ENCODE measurements at regions of chr3 and their contacts with region 1.

Region 1: DNA sequence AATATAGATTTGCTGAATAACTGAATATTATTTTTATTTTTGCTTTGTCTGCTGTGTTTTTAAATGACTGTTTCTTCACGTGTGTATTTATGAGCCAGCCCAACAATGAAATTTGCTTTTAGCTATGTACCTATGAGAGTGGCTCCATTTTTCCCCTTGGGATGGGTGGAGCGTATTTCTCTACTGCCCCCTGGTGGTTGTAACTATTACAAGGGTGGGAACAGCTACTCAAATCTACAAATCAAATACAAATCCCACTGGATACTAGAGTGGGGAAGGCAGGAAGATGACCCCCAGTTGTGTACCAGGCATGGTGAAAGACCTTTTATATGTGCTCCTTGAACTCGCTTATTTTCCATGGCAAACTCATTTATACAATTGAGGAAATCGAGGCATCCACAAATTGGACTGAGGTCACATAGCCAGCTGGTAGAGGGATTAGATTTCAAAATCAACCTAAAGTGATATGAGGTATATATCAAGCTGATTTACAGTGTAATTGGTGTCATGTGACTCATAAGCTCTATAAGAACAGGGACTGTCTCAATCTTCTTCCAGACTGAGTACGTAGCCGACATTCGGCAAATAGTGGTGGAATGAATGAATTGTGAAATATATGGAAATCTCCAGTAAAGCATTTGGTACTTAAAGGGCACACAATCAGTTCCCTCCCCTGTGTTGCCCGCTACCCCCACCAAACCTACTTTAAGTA is 69.5 kb upstream of the VEPH1 start:
- DNase-seq: no peak
- ATAC-seq: peak; percentile 42 to 68 (median 56)
- H3K4me3 ChIP-seq: no peak overlapping the region
- H3K27ac ChIP-seq: no peak overlapping the region
- H3K4me1 ChIP-seq: no peaks in the 10 kb centered on the region
- H3K27me3 ChIP-seq: no peaks in the 10 kb centered on the region
- CTCF ChIP-seq: peak; percentile 66

Region 2: DNA sequence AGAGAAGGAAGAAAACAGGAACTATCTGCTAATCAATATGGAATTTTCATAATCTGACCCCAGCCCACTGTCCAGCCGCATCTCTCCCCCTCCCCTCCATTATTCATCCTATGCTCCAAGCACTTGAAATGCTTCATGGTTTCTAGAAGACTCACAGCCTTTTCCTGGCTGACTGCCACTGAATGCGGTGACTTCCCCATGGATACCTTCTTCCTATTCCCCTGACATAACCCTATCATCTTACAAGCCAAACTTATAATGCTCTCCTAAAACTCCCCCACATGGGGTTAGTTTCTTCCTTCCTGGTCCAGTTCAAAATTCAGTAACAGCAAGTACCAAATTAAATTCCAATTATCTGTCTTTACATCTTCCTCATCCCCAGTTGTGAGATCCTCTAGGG is 167.3 kb before region 1 on chr3:
- intact Hi-C with region 1: no loop called
- DNase-seq: no peak
- ATAC-seq: no peak
- H3K4me3 ChIP-seq: no peak overlapping the region
- H3K27ac ChIP-seq: no peak overlapping the region
- H3K4me1 ChIP-seq: no peaks in the 10 kb centered on the region
- H3K27me3 ChIP-seq: no peaks in the 10 kb centered on the region
- CTCF ChIP-seq: no peak

Region 3: DNA sequence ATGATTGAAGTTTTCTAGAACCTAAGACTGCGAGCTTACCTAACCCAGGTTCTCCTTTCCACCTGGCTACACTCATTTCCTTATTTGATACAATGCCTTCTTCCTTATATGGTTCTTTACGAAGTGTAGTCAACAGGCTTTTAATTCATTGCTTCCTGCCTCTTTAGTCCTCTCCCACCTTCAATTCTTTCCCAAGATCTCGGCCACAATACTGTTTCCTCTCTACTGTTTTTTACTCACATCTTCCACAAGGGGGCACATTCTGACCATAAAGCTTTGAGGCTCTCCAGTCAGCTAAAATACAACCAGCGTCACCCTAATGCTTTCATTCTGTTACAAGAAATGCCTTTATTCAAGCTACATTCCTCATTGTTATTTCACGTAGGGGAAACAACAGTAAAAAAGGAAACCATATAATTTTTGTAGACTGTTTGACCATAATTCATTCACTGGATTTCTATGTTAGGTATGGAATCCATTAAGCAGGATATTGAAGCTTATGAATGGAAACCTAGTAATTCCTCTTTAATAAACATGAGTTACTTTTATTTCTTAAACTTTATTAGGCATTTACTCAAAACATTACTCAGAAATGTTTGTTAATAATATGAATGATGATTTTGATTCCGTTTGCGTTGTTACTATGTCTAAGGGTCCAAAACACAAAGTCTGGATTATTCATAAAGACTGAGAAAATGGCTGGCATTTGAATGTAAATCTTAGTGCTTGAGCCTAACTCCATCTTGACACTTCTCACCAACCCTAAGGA is 40.0 kb before region 1 on chr3:
- intact Hi-C with region 1: loop called (anchors 1 to 2 kb)
- DNase-seq: no peak
- ATAC-seq: peak in 3 of 4 donors; percentile 75 to 83 (median 77)
- H3K4me3 ChIP-seq: no peak overlapping the region
- H3K27ac ChIP-seq: peak overlapping the region; percentile 30
- H3K4me1 ChIP-seq: no peaks in the 10 kb centered on the region
- H3K27me3 ChIP-seq: no peaks in the 10 kb centered on the region
- CTCF ChIP-seq: peak; percentile 63

Region 4: GRCh38 chr3:157542711-157543500 is 29.8 kb before region 1 on chr3:
- intact Hi-C with region 1: loop called in 1 of 2 experiments (anchors 1 kb)
- DNase-seq: peak; percentile 79 to 89
- ATAC-seq: peak; percentile 36 to 80 (median 76)
- H3K4me3 ChIP-seq: peak overlapping the region; percentile 58
- H3K27ac ChIP-seq: no peak overlapping the region
- H3K4me1 ChIP-seq: no peaks in the 10 kb centered on the region
- H3K27me3 ChIP-seq: peaks cover 0 to 30% (median 10%) of the 10 kb centered on the region in 3 donors
- CTCF ChIP-seq: no peak

Measured in psoas muscle (tissue), 8 donors.